Natural killer cell (primary cell): ENCODE measurements at regions of chr19 and their contacts with region 1.

Region 1: GRCh38 chr19:506404-507285 is 652 bp upstream of the TPGS1 start:
- DNase-seq: peak; percentile 91 to 99
- ATAC-seq: peak; percentile 52 to 79 (median 62)
- H3K4me3 ChIP-seq: peak overlapping the region; percentile 68
- H3K4me3 Mint-ChIP-seq: peak overlapping the region; percentile 96
- H3K27ac ChIP-seq: peak overlapping the region; percentile 97
- H3K27ac Mint-ChIP-seq: peak overlapping the region; percentile 96 to 98
- H3K4me1 ChIP-seq: peaks cover 47% of the 10 kb centered on the region
- H3K4me1 Mint-ChIP-seq: peaks cover 20 to 44% of the 10 kb centered on the region in 2 donors
- H3K27me3 ChIP-seq: no peaks in the 10 kb centered on the region
- H3K27me3 Mint-ChIP-seq: no peaks in the 10 kb centered on the region
- CTCF ChIP-seq: peak; percentile 93

Region 2: DNA sequence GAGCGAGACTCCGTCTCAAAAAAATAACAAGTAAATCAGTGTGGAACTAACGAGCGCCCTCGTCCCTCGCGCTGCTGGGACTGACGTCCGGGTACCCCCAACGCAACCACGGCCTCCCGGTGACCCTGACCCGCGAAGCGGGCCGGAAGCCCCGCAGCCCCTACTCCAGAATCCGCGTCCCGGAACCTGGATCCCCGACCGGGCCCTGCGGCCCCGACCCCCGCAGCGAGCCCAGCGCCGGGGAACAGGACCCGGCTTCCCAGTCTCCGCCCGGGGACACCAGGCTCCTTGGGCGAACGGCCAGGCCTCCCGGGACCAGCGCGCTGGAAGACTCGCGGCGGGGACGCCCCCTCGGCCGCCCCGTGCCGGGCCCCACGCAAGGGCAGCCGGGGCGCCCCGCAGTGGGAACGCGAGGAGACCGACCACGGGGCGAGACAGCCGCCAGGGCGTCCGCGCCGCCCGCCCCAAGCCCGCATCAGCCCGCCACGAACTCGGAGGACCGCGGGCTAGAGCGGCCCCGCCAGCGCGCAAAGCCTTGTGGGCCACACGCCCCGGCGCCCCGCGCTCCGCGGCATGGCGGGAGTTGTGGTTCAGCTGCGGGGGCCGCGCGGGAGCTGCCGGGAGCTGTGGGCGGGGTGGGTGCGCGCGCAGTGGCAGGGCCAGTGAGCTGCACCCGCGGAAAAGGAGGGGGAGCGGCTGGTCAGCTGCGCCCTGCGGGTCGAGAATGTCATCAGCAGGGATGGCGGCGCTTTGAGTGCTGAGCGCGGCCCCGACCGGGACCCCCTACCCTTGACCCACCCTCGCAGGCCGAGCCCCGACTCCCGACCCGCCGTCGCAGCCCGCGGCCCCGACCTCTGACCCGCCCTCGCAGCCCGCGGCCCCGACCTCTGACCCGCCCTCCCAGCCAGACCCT is 17.9 kb before region 1 on chr19:
- intact Hi-C with region 1: loop called (anchors 2 kb)
- DNase-seq: peak; percentile 95 to 96
- ATAC-seq: peak; percentile 91 to 98 (median 94)
- H3K4me3 ChIP-seq: peak overlapping the region; percentile 72
- H3K4me3 Mint-ChIP-seq: peak overlapping the region; percentile 91
- H3K27ac ChIP-seq: peak overlapping the region; percentile 94
- H3K27ac Mint-ChIP-seq: peak overlapping the region; percentile 73 to 86
- H3K4me1 ChIP-seq: peaks cover 14% of the 10 kb centered on the region
- H3K4me1 Mint-ChIP-seq: peaks cover 0 to 10% of the 10 kb centered on the region in 2 donors
- H3K27me3 ChIP-seq: no peaks in the 10 kb centered on the region
- H3K27me3 Mint-ChIP-seq: peaks cover 0 to 10% of the 10 kb centered on the region in 2 donors
- CTCF ChIP-seq: no peak

Region 3: DNA sequence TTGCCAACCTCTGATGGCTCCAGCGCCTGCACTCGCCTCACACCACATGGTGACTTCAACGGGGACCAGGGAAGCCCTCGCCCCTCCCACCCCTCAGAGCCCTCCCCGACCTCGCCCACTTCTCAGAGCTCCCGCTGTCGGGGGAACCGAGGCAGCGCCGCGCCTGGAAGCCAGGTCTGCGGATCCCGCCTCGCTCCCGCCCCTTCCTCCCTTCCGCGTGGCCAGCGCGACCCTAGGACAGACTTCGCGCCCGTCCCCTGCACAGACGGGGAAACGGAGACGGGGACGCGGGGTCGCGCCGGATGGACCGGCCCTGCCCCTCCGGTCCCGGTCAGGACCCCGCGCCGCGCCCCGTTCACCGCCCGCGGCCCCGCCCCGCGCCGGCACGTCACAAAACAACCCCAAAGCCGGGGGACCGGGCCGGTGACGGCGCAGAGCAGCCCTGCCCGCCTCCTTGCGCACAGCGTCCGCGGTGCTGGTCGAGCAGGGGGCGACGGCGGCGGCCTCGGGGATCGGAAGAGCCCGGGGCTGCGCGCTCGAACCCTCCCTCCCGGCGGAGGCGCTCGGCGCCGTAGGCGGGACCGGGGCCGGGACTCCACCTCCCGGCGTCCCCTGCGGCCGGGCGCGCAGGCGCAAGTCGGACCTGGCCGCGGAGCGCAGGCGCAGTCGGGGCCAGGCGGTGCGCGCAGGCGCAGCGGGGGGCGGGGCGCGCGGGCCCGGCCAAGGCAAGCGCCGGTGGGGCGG is 24.5 kb after region 1 on chr19:
- intact Hi-C with region 1: loop called (anchors 2 kb)
- DNase-seq: peak; percentile 95 to 98
- ATAC-seq: peak; percentile 73 to 87 (median 77)
- H3K4me3 ChIP-seq: peak overlapping the region; percentile 78
- H3K4me3 Mint-ChIP-seq: peak overlapping the region; percentile 83
- H3K27ac ChIP-seq: peak overlapping the region; percentile 79
- H3K27ac Mint-ChIP-seq: peak overlapping the region; percentile 54 to 89
- H3K4me1 ChIP-seq: peaks cover 36% of the 10 kb centered on the region
- H3K4me1 Mint-ChIP-seq: peaks cover 12 to 18% of the 10 kb centered on the region in 2 donors
- H3K27me3 ChIP-seq: no peaks in the 10 kb centered on the region
- H3K27me3 Mint-ChIP-seq: no peaks in the 10 kb centered on the region
- CTCF ChIP-seq: no peak

Region 4: DNA sequence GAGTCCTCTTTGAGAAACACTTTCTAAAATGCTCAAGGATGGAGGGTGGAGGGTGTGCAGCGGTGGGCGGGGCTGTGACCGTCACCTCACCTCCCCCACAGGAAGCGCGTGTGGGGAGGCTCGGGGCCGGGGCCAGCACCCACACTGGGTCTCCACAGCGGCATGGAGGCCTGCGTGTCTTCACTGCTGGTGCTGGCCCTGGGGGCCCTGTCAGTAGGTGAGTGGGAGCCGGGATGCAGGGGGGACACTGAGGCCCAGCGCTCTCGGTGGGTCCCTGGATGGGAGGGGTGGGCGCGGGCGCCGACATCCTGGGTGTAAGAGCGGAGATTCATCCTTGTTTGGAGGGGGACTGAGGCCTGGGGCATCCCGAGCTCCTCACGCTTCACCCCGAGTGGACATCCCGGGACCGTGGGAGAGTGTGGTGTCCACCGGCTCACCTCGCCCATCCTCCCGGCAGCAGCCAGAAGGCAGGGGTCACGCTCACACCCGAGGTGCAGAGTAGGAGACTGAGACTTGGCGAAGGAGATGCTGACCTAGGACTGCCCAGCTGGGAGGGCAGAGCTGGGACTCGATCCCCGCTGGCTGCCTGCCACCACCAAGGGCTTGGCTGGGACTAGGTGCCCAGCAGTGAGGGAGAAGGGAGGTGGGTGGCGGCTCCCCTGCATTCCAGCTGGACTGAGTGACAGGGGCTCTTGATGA is 37.4 kb after region 1 on chr19 and contains the start of gene GZMM:
- intact Hi-C with region 1: loop called (anchors 2 kb)
- DNase-seq: peak; percentile 87 to 93
- ATAC-seq: peak; percentile 94 to 98 (median 94)
- H3K4me3 ChIP-seq: peak within 1 kb of the TSS; percentile 82
- H3K4me3 Mint-ChIP-seq: peak within 1 kb of the TSS; percentile 90
- H3K27ac ChIP-seq: peak within 1 kb of the TSS; percentile 85
- H3K27ac Mint-ChIP-seq: peak within 1 kb of the TSS; percentile 90 to 98
- H3K4me1 ChIP-seq: peaks cover 46% of the 10 kb centered on the region
- H3K4me1 Mint-ChIP-seq: peaks cover 13 to 30% of the 10 kb centered on the region in 2 donors
- H3K27me3 ChIP-seq: no peaks in the 10 kb centered on the region
- H3K27me3 Mint-ChIP-seq: no peaks in the 10 kb centered on the region
- CTCF ChIP-seq: no peak
- total RNA-seq, gene GZMM: 186 to 286 (median 253) TPM

Region 5: DNA sequence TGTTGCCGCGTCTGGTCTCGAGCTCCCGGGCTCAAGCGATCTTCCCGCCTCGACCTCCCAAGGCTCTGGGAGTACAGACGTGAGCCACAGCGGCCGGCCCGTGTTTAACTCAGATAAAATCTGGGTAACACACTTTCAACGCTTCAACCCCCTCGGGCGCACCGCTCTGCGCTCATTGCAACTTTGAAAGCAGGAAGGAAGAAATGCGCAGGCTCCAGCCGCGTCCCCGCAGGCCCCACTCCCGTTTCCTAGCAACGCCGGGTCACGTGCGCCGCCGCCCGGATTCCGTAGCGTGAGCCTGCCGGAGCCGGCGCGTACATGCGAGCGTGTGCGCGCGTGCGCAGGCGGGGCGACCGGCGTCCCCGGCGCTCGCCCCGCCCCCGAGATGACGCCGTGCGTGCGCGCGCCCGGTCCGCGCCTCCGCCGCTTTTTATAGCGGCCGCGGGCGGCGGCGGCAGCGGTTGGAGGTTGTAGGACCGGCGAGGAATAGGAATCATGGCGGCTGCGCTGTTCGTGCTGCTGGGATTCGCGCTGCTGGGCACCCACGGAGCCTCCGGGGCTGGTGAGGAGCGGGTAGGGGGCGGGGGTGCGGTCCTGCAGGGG is 65.6 kb after region 1 on chr19 and contains the start of gene BSG:
- intact Hi-C with region 1: loop called (anchors 1 kb)
- DNase-seq: peak; percentile 99 to 100
- ATAC-seq: peak; percentile 77 to 92 (median 87)
- H3K4me3 ChIP-seq: peak within 1 kb of the TSS; percentile 84
- H3K4me3 Mint-ChIP-seq: peak within 1 kb of the TSS; percentile 97
- H3K27ac ChIP-seq: peak within 1 kb of the TSS; percentile 93
- H3K27ac Mint-ChIP-seq: peak within 1 kb of the TSS; percentile 88 to 92
- H3K4me1 ChIP-seq: peaks cover 52% of the 10 kb centered on the region
- H3K4me1 Mint-ChIP-seq: peaks cover 31 to 54% of the 10 kb centered on the region in 2 donors
- H3K27me3 ChIP-seq: no peaks in the 10 kb centered on the region
- H3K27me3 Mint-ChIP-seq: no peaks in the 10 kb centered on the region
- CTCF ChIP-seq: no peak
- total RNA-seq, gene BSG: 229 to 248 (median 236) TPM